HCT116 (cell line): ENCODE measurements at regions of chr7 and their contacts with region 1.

Region 1: DNA sequence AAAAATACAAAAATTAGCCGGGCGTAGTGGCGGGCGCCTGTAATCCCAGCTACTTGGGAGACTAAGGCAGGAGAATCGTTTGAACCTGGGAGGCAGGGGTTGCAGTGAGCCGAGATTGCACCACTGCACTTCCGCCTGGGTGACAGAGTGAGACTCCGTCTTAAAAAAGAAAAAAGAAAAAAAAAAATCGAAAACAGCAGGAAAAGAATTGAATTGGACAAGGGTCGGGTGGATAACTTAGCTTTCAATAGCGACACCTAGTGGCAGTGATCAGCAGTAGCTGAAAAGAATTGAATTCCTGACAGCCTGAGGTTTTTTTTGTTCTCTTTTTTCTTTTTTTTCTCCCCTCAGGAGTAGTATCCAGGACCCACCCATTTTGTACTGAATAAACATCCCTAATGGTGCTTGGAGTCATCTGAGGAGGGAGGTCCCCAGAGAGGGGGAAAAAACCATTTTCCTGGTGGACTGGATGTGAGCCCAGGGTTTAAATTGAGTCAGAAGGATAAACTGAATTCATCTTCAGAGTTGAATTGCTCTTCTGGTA is 55.1 kb downstream of the CYCS start:
- DNase-seq: peak; percentile 72
- ATAC-seq: peak; percentile 77
- H3K4me3 ChIP-seq: peak overlapping the region in 1 of 2 experiments; percentile 15; a peak in 1 of 4 replicates
- H3K27ac ChIP-seq: no peak overlapping the region
- H3K4me1 ChIP-seq: peaks cover 0 to 23% of the 10 kb centered on the region in 2 experiments; a peak in 2 of 4 replicates
- H3K27me3 ChIP-seq: no peaks in the 10 kb centered on the region
- CTCF ChIP-seq: peak; percentile 73 to 86 (median 80)
- POLR2A ChIP-seq: no peak
- RAD21 ChIP-seq: peak; percentile 89

Region 2: GRCh38 chr7:23445326-23445725 is 1624.6 kb before region 1 on chr7:
- CTCF ChIA-PET with region 1: no interaction called
- POLR2A ChIA-PET with region 1: no interaction called
- RAD21 ChIA-PET with region 1: no interaction called
- intact Hi-C with region 1: no loop called
- DNase-seq: no peak
- ATAC-seq: no peak
- H3K4me3 ChIP-seq: no peak overlapping the region
- H3K27ac ChIP-seq: no peak overlapping the region
- H3K4me1 ChIP-seq: peaks cover 0 to 3% of the 10 kb centered on the region in 2 experiments; a peak in 1 of 4 replicates
- H3K27me3 ChIP-seq: no peaks in the 10 kb centered on the region
- CTCF ChIP-seq: no peak
- POLR2A ChIP-seq: no peak
- RAD21 ChIP-seq: no peak

Region 3: GRCh38 chr7:24545215-24545614 is 524.8 kb before region 1 on chr7:
- CTCF ChIA-PET with region 1: no interaction called
- POLR2A ChIA-PET with region 1: no interaction called
- RAD21 ChIA-PET with region 1: no interaction called
- intact Hi-C with region 1: no loop called
- DNase-seq: no peak
- ATAC-seq: no peak
- H3K4me3 ChIP-seq: no peak overlapping the region
- H3K27ac ChIP-seq: no peak overlapping the region
- H3K4me1 ChIP-seq: no peaks in the 10 kb centered on the region
- H3K27me3 ChIP-seq: 0 out of 2 replicates have a peak, but pooled peaks cover 6% of the 10 kb centered on the region
- CTCF ChIP-seq: no peak
- POLR2A ChIP-seq: no peak
- RAD21 ChIP-seq: no peak

Region 4: GRCh38 chr7:24894429-24895221 is 175.3 kb before region 1 on chr7:
- CTCF ChIA-PET with region 1: interaction called, 3 read pairs
- POLR2A ChIA-PET with region 1: no interaction called
- RAD21 ChIA-PET with region 1: no interaction called
- intact Hi-C with region 1: loop called (anchors 5 kb)
- DNase-seq: no peak
- ATAC-seq: peak; percentile 79
- H3K4me3 ChIP-seq: no peak overlapping the region
- H3K27ac ChIP-seq: no peak overlapping the region
- H3K4me1 ChIP-seq: peaks cover 3 to 17% of the 10 kb centered on the region in 2 experiments; a peak in 3 of 4 replicates
- H3K27me3 ChIP-seq: no peaks in the 10 kb centered on the region
- CTCF ChIP-seq: peak; percentile 39 to 55 (median 50); a peak in 5 of 6 replicates
- POLR2A ChIP-seq: no peak
- RAD21 ChIP-seq: peak; percentile 59

Region 5: DNA sequence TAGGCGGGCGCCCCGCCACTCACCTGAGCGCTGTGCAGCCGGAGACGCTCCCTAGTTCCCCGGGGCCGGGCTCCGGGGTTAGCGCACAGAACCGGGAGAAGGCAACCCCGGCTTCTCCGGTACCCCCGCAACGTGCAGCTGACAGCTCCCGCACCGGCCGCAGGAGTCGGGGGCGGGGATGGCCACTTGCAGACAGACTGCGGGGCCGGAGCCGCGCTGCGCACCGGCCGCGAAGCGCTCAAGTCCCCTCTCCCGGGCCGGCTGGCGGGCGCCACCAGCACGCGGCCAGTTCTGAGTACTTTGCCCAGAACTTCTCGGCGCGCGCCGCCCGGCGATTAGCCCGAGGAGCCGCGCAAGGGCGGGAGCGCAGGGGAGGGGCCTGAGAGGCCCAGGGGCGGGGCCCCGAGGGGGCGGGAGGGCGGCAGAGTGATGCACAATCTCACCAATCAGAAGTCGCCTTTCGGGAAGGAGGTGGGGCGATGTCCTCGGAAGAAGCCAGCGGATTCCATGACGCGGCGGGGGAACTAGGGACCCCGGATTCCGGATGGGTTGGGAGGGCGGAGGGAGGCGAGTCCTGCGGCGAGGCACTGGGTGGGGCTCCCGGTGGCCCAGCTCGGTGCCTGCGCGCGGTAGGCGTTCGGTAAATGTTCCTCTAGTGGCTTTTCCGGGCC is 90.0 kb before region 1 on chr7 and contains the start of gene OSBPL3:
- CTCF ChIA-PET with region 1: interaction called, 15 read pairs
- POLR2A ChIA-PET with region 1: no interaction called
- RAD21 ChIA-PET with region 1: no interaction called
- intact Hi-C with region 1: loop called (anchors 5 kb)
- DNase-seq: peak; percentile 92
- ATAC-seq: peak; percentile 80
- H3K4me3 ChIP-seq: peak within 1 kb of the TSS; percentile 55 to 66
- H3K27ac ChIP-seq: peak within 1 kb of the TSS; percentile 89
- H3K4me1 ChIP-seq: peaks cover 14 to 51% of the 10 kb centered on the region in 2 experiments
- H3K27me3 ChIP-seq: no peaks in the 10 kb centered on the region
- CTCF ChIP-seq: no peak
- POLR2A ChIP-seq: peak; percentile 24
- RAD21 ChIP-seq: peak; percentile 35
- total RNA-seq, gene OSBPL3: 36.8 TPM